Stomach (tissue), 19 donors: ENCODE measurements at regions of chr1 and their contacts with region 1.

Region 1: DNA sequence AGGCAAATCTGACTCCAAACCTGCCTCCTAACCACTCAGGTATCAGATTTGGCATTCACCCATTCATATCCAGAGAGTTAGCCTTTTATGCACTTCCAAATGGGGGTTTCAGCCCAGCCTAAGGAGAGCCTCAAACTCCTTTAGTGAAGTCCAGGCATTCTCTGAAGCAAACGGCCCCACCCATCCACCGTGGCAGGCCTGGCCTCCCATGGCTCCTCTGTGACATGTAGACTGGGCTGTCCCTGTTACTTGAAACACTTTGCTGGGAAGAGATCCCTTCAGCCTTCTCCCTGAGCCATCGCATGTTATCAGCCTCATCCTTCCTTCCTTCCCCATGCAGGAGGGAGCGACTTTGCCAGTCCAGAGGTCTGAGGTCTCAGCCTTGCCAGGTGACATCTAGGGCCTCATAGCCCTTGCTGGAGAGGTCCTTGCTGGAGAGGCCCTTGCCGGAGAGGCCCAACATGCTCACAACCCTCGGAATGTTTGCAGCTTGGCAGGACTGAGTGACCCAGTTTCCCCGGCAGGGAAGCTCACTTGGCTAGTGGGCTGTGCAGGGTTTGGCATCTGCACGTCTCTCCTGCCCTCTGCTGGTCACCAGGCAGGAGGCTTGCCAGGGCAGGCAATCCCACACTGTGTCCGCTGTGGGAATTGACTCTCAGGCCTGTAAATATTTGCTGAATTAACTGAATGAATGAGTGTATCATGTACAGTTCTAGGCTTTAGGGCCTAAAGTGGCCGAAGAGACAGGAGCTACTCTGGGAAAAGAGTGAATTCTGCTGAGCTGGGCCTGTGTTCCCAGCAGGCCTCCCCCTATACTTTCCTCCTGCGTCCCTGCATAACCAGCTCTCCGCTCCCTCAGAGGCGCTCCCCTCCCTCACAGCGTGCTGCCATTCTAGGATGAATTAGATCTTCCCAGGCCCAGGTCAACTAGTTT is 26.7 kb upstream of the RBM15 start:
- DNase-seq: peak; percentile 84 to 93
- H3K4me3 ChIP-seq: no peak overlapping the region
- H3K27ac ChIP-seq: no peak overlapping the region
- H3K4me1 ChIP-seq: peaks cover 7 to 10% (median 8%) of the 10 kb centered on the region in 4 donors
- H3K27me3 ChIP-seq: no peaks in the 10 kb centered on the region
- CTCF ChIP-seq: peak in 5 of 7 experiments; percentile 87 to 98 (median 93)
- EP300 ChIP-seq: no peak
- POLR2A ChIP-seq: no peak

Region 2: DNA sequence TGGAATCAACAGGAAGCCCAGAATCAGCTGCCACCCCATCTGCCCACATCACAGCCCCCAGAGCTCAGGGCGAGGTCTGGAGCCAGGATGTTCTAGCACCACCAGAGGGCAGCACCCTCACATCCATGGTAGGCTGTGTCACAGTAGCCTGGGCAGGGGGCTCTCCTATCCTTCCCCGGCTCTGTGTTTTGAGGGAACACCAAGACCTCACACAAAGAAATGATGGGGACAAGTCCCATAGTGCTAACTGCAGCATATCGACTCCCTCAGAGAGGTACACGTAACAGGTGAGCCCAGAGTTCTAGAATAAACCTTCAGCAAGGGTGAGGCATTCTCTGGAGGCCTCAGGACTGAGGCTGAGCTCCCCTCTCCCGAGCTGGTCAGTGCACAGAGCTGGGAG is 104.6 kb before region 1 on chr1:
- intact Hi-C with region 1: loop called (anchors 2 kb)
- DNase-seq: peak; percentile 75 to 89
- H3K4me3 ChIP-seq: no peak overlapping the region
- H3K27ac ChIP-seq: no peak overlapping the region
- H3K4me1 ChIP-seq: peaks cover 30 to 46% (median 41%) of the 10 kb centered on the region in 4 donors
- H3K27me3 ChIP-seq: peaks cover 0 to 12% (median 10%) of the 10 kb centered on the region in 3 donors
- CTCF ChIP-seq: peak in 5 of 7 experiments; percentile 72 to 92 (median 84)
- EP300 ChIP-seq: no peak
- POLR2A ChIP-seq: no peak

Region 3: GRCh38 chr1:110460253-110461220 is 148.1 kb after region 1 on chr1:
- intact Hi-C with region 1: loop called (anchors 10 kb)
- DNase-seq: peak; percentile 87 to 91
- H3K4me3 ChIP-seq: no peak overlapping the region
- H3K27ac ChIP-seq: no peak overlapping the region
- H3K4me1 ChIP-seq: peaks cover 22 to 31% (median 25%) of the 10 kb centered on the region in 4 donors
- H3K27me3 ChIP-seq: no peaks in the 10 kb centered on the region
- CTCF ChIP-seq: peak in 5 of 7 experiments; percentile 87 to 98 (median 96)
- EP300 ChIP-seq: no peak
- POLR2A ChIP-seq: no peak